AG04449 (cell line): ENCODE measurements at regions of chr6 and their contacts with region 1.

Region 1: GRCh38 chr6:11172501-11173332 is 59.8 kb downstream of the NEDD9 start:
- DNase-seq: no peak
- H3K4me3 ChIP-seq: no peak overlapping the region
- CTCF ChIP-seq: peak; percentile 77

Region 2: GRCh38 chr6:11155589-11155988 is 17.1 kb before region 1 on chr6:
- CTCF ChIA-PET with region 1: interaction called, 11 read pairs
- POLR2A ChIA-PET with region 1: no interaction called
- DNase-seq: no peak
- H3K4me3 ChIP-seq: no peak overlapping the region
- CTCF ChIP-seq: no peak

Region 3: GRCh38 chr6:11161031-11161966 is 11.4 kb before region 1 on chr6:
- CTCF ChIA-PET with region 1: interaction called, 12 read pairs
- POLR2A ChIA-PET with region 1: no interaction called
- DNase-seq: no peak
- H3K4me3 ChIP-seq: no peak overlapping the region
- CTCF ChIP-seq: no peak

Region 4: DNA sequence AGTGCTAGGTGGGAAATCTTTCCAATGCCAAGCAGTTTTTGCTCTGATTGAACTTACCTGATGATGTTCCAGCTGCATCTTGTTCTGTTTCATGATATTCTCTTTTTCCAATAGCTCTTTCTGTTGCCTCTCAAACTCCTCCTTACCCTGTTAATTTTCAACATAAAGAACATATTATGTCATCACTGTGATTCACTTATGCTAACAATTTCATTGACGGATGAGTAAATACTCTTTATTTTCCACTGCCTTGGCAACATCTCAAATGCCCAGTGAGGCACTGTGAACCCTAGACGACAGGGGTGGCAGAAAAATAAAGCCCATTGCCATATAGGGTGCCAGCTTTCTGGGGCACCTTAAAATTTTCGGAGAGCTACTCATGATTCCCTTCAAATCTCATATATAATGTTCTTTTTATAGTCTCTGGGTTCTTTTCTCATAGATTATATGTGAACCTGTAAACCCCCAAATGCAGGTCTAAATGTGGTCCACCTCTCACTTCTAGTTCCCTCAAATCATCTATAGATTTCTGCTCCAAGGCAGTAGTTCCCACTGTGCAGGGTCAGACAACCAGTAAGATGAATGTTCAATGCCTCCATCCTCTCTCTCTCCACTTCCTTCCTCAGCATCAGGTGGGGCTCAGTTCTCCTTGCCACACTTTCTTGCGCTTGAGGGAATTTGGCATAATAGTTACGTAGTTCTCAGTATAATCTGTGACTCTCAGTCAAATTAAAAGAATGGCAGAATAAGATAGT is 15.6 kb after region 1 on chr6:
- CTCF ChIA-PET with region 1: interaction called, 24 read pairs
- POLR2A ChIA-PET with region 1: no interaction called
- DNase-seq: no peak
- H3K4me3 ChIP-seq: no peak overlapping the region
- CTCF ChIP-seq: no peak

Region 5: GRCh38 chr6:11232193-11232769 is 59.6 kb after region 1 on chr6 and contains the start of gene NEDD9:
- CTCF ChIA-PET with region 1: interaction called, 13 read pairs
- POLR2A ChIA-PET with region 1: no interaction called
- DNase-seq: peak; percentile 79
- H3K4me3 ChIP-seq: peak within 1 kb of the TSS; percentile 85
- CTCF ChIP-seq: no peak